ENCODE measurements at regions of chr19 and their contacts with region 1.

Region 1: DNA sequence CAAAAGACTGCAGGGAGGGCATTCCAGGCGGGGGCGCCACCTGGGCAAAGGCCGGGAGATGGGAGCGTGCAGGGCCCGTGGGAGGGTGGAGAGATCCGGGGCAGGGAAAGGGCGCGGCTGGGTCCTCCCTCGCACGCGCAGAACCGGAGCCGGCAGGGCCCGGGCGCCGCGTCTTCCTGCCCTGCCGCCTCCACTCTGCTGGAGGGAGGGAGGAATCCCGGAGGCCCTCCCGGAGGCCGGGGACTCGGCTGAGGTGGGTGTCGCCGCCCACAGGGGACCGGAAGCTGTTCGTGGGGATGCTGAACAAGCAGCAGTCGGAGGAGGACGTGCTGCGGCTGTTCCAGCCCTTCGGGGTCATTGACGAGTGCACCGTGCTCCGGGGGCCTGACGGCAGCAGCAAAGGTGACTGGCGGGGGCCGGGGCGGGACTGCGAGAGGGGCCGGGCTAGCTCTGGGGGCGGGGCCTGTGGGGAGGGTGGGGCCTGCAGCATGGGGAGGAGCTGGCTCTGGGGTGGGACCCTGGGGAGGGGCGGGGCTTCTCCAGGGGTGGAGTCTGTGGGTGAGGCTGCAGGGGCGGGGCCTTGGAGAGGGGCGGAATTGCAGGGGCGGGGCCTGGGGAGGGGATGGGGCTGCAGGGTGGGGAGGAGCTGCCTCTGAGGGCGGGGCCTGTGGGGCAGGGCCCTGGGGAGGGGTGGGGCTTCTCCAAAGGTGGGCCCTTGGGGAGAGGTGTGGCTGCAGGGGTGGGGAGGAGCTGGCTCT is 51.3 kb downstream of the CELF5 start:
- DNase-seq: peak; percentile 90 to 97 (median 92)
- H3K4me3 ChIP-seq: peak overlapping the region; percentile 47 to 78
- H3K4me3 Mint-ChIP-seq: peak overlapping the region; percentile 80 to 93 (median 86)
- H3K27ac ChIP-seq: peak overlapping the region; percentile 23
- H3K27ac Mint-ChIP-seq: peak overlapping the region; percentile 70 to 93 (median 86)
- H3K4me1 ChIP-seq: peaks cover 15% of the 10 kb centered on the region
- H3K4me1 Mint-ChIP-seq: peaks cover 7 to 22% (median 16%) of the 10 kb centered on the region in 4 donors
- H3K27me3 ChIP-seq: no peaks in the 10 kb centered on the region
- H3K27me3 Mint-ChIP-seq: peaks cover 12% of the 10 kb centered on the region in 2 donors

Region 2: DNA sequence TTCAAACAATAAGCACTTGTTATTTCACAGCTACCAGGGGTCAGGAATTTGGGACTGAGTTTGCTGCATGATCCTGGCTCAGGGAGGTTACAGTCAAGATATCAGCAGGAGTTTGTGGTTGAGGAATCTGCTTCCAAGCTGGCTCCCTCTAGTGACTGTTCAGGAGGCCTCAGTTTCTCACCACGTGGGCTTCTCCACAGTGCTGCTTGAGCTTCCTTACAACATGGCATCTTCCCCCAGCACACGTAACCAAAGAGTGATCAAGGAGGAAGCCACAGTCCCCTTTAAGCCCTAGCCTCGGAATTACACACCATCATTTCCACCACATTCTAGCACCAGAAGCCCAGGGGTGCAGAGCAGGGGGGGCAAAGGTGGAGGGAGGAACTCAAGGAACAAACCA is 22.5 kb before region 1 on chr19:
- CTCF ChIA-PET with region 1: no interaction called
- POLR2A ChIA-PET with region 1: no interaction called
- intact Hi-C with region 1: no loop called
- DNase-seq: no peak
- H3K4me3 ChIP-seq: no peak overlapping the region
- H3K4me3 Mint-ChIP-seq: no peak overlapping the region
- H3K27ac ChIP-seq: no peak overlapping the region
- H3K27ac Mint-ChIP-seq: no peak overlapping the region
- H3K4me1 ChIP-seq: no peaks in the 10 kb centered on the region
- H3K4me1 Mint-ChIP-seq: peaks cover 0 to 2% (median 0%) of the 10 kb centered on the region in 4 donors
- H3K27me3 ChIP-seq: no peaks in the 10 kb centered on the region
- H3K27me3 Mint-ChIP-seq: peaks cover 16 to 27% of the 10 kb centered on the region in 2 donors

Region 3: GRCh38 chr19:3304871-3305423 is 29.2 kb after region 1 on chr19:
- CTCF ChIA-PET with region 1: interaction called, 13 read pairs
- POLR2A ChIA-PET with region 1: interaction called, 4 read pairs
- intact Hi-C with region 1: no loop called
- DNase-seq: peak; percentile 64 to 76 (median 70)
- H3K4me3 ChIP-seq: no peak overlapping the region
- H3K4me3 Mint-ChIP-seq: no peak overlapping the region
- H3K27ac ChIP-seq: no peak overlapping the region
- H3K27ac Mint-ChIP-seq: no peak overlapping the region
- H3K4me1 ChIP-seq: no peaks in the 10 kb centered on the region
- H3K4me1 Mint-ChIP-seq: peaks cover 0 to 2% (median under 1%) of the 10 kb centered on the region in 4 donors
- H3K27me3 ChIP-seq: no peaks in the 10 kb centered on the region
- H3K27me3 Mint-ChIP-seq: peaks cover 13 to 19% of the 10 kb centered on the region in 2 donors